AG04449 (cell line): ENCODE measurements at regions of chr3 and their contacts with region 1.

Region 1: GRCh38 chr3:67384760-67385397 is 269.5 kb downstream of the SUCLG2 start:
- DNase-seq: no peak
- H3K4me3 ChIP-seq: no peak overlapping the region
- CTCF ChIP-seq: peak; percentile 68

Region 2: GRCh38 chr3:67605377-67605776 is 220.5 kb after region 1 on chr3:
- CTCF ChIA-PET with region 1: interaction called, 89 read pairs
- POLR2A ChIA-PET with region 1: no interaction called
- DNase-seq: peak; percentile 46
- H3K4me3 ChIP-seq: no peak overlapping the region
- CTCF ChIP-seq: peak; percentile 62

Region 3: DNA sequence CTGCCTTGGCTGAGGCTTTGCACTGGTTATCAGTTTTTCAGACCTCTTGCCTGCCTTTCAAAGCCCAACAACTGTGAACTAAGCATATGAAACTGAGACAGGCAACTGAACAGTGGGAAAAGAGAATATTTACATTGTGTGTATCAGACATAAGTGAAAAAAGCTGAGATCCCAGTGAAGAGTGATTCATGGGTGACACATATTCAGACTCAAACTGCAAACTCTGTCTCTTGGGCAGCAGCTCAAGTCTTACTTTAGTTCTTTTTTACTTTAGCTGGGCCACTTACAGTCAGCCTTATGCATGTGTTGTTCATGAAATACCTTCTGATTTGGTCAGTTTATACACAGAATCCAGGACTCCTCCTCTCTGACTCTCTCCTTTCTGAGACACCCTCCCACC is 250.4 kb after region 1 on chr3:
- CTCF ChIA-PET with region 1: interaction called, 11 read pairs
- POLR2A ChIA-PET with region 1: no interaction called
- DNase-seq: peak; percentile 69
- H3K4me3 ChIP-seq: no peak overlapping the region
- CTCF ChIP-seq: no peak

Region 4: DNA sequence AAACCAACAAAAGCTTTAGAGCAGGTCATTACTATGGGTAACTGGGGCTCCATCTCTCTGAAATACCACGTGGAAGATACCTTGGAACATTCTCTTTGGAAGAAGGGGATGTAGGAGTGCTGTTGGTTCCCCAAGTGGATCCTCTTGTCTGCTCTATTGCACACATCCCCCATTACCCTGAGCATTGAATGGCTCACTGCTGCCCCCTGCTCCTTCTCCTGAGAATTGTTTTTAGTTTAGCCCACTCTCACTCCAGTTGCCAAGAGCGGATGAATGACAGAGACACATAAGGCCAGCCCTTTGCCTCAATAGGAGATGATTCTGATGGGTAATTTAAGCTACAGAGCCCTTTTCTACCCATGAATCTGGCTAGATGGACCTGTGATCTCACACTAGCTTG is 405.2 kb after region 1 on chr3:
- CTCF ChIA-PET with region 1: interaction called, 141 read pairs
- POLR2A ChIA-PET with region 1: no interaction called
- DNase-seq: no peak
- H3K4me3 ChIP-seq: no peak overlapping the region
- CTCF ChIP-seq: peak; percentile 67